ENCODE measurements at regions of chr21 and their contacts with region 1.

Region 1: DNA sequence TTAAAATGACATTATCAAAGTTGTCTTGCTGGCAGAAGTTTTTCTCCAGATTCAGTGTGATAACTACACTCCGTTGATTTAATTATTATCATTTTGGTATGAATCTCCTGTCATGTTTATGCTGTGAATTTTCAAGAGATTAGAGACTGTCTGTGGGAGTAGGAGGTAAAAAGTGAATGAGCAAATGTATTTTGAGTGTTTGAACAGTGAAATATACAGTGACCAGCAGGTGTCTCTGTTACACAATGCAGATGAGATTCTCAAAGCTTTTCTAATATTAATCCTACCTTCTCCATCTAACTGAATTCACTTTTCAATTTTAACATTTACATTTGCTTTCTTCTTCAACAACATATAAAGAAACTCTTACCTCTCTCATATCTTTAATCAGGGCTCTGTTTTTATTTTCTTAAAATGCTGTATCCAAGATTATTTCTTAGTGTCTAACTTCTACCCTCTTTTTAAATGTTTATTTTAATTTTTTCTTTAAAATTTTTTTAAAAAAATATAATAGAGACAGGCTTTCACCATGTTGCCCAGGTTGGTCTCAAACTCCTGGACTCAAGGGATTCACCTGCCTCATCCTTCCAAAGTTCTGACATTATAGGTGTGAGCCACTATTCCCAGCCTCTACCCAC is 20.9 kb upstream of the HSPA13 start:
- DNase-seq: peak in 2 of 9 experiments; percentile 54 to 68
- ATAC-seq: peak; percentile 74
- H3K4me3 ChIP-seq: no peak overlapping the region
- H3K4me3 Mint-ChIP-seq: no peak overlapping the region
- H3K27ac ChIP-seq: no peak overlapping the region
- H3K27ac Mint-ChIP-seq: no peak overlapping the region
- H3K4me1 ChIP-seq: no peaks in the 10 kb centered on the region
- H3K4me1 Mint-ChIP-seq: no peaks in the 10 kb centered on the region
- H3K27me3 ChIP-seq: no peaks in the 10 kb centered on the region
- H3K27me3 Mint-ChIP-seq: no peaks in the 10 kb centered on the region
- CTCF ChIP-seq: peak; percentile 75

Region 2: GRCh38 chr21:14620152-14620551 is 216.4 kb after region 1 on chr21:
- CTCF ChIA-PET with region 1: no interaction called
- POLR2A ChIA-PET with region 1: no interaction called
- intact Hi-C with region 1: no loop called
- DNase-seq: peak in 2 of 9 experiments; percentile 10 to 22
- ATAC-seq: no peak
- H3K4me3 ChIP-seq: no peak overlapping the region
- H3K4me3 Mint-ChIP-seq: no peak overlapping the region
- H3K27ac ChIP-seq: no peak overlapping the region
- H3K27ac Mint-ChIP-seq: no peak overlapping the region
- H3K4me1 ChIP-seq: no peaks in the 10 kb centered on the region
- H3K4me1 Mint-ChIP-seq: peaks cover 2% of the 10 kb centered on the region
- H3K27me3 ChIP-seq: no peaks in the 10 kb centered on the region
- H3K27me3 Mint-ChIP-seq: no peaks in the 10 kb centered on the region
- CTCF ChIP-seq: no peak

Region 3: DNA sequence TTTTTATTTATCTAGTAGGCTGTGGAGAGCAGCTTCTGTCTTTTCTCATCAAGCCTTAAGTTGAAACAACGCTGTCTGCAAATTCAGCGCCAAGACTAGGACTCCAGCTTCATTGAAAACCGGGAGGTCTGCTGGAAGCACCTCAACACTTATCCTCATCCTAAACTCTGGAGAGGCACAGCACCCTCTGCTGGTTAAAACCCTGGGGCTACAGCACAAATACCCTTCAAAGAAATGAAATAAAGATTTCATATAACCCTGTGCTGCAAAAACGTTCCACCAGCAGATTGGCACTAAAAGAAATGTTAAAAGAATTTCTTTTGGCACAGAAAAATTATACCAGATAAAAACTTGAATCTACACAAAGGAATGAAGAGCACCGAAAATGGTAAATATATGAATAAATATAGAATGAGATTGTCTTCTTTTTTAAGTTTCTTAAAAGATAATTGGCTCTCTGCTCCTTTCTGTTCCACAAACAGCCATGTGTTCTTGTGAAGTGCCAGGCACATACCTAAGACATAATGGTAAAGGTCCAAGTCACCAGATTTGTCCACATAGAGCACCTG is 370.1 kb after region 1 on chr21:
- CTCF ChIA-PET with region 1: interaction called, 3 read pairs
- POLR2A ChIA-PET with region 1: no interaction called
- intact Hi-C with region 1: loop called (anchors 1 to 10 kb)
- DNase-seq: peak; percentile 5 to 63 (median 50)
- ATAC-seq: no peak
- H3K4me3 ChIP-seq: no peak overlapping the region
- H3K4me3 Mint-ChIP-seq: no peak overlapping the region
- H3K27ac ChIP-seq: no peak overlapping the region
- H3K27ac Mint-ChIP-seq: no peak overlapping the region
- H3K4me1 ChIP-seq: no peaks in the 10 kb centered on the region
- H3K4me1 Mint-ChIP-seq: no peaks in the 10 kb centered on the region
- H3K27me3 ChIP-seq: no peaks in the 10 kb centered on the region
- H3K27me3 Mint-ChIP-seq: no peaks in the 10 kb centered on the region
- CTCF ChIP-seq: peak; percentile 64

Region 4: GRCh38 chr21:14864211-14865021 is 460.6 kb after region 1 on chr21:
- CTCF ChIA-PET with region 1: interaction called, 5 read pairs
- POLR2A ChIA-PET with region 1: no interaction called
- intact Hi-C with region 1: loop called in 1 of 2 experiments (anchors 5 kb)
- DNase-seq: peak in 5 of 9 experiments; percentile 17 to 34 (median 24)
- ATAC-seq: no peak
- H3K4me3 ChIP-seq: no peak overlapping the region
- H3K4me3 Mint-ChIP-seq: no peak overlapping the region
- H3K27ac ChIP-seq: no peak overlapping the region
- H3K27ac Mint-ChIP-seq: no peak overlapping the region
- H3K4me1 ChIP-seq: no peaks in the 10 kb centered on the region
- H3K4me1 Mint-ChIP-seq: peaks cover 8% of the 10 kb centered on the region
- H3K27me3 ChIP-seq: no peaks in the 10 kb centered on the region
- H3K27me3 Mint-ChIP-seq: no peaks in the 10 kb centered on the region
- CTCF ChIP-seq: no peak

Region 5: DNA sequence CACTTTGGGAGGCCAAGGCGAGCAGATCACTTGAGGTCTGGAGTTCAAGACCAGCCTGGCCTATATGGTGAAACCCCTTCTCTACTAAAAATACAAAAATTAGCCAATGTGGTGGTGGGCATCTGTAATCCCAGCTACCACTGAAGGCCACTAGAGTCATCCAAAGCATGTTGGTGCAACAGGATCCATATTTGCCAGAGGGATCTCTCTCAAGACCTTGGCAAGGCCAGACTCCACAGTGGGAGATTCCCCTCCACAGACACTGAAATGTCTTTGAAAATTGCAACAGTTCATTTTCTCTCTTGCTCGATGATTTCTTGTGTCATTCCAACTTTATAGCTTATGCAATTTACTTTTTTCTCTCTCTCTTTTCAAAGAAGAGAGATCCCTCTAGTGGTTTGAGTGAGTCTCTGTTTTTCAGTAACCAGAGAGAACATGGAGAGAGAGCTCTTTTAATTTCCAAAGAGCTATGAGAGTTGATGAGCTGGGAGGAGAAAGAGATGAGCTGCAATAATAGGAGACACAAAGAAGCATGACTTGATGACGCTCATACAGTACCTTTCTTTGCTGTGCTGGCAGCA is 1149.2 kb after region 1 on chr21:
- CTCF ChIA-PET with region 1: interaction called, 3 read pairs
- POLR2A ChIA-PET with region 1: no interaction called
- intact Hi-C with region 1: loop called in 1 of 2 experiments (anchors 5 kb)
- DNase-seq: peak in 2 of 9 experiments; percentile 19 to 33
- ATAC-seq: no peak
- H3K4me3 ChIP-seq: no peak overlapping the region
- H3K4me3 Mint-ChIP-seq: no peak overlapping the region
- H3K27ac ChIP-seq: no peak overlapping the region
- H3K27ac Mint-ChIP-seq: no peak overlapping the region
- H3K4me1 ChIP-seq: peaks cover 8% of the 10 kb centered on the region
- H3K4me1 Mint-ChIP-seq: peaks cover 14% of the 10 kb centered on the region
- H3K27me3 ChIP-seq: no peaks in the 10 kb centered on the region
- H3K27me3 Mint-ChIP-seq: no peaks in the 10 kb centered on the region
- CTCF ChIP-seq: peak; percentile 71

Measured in CD8-positive, alpha-beta T cell (primary cell).